H1 (cell line): ENCODE measurements at regions of chr5 and their contacts with region 1.

Region 1: GRCh38 chr5:177454397-177455035 is 7.9 kb downstream of the PRR7 start:
- DNase-seq: peak in 1 of 2 experiments; percentile 98
- H3K4me3 ChIP-seq: peak overlapping the region; percentile 47 to 86 (median 81)
- H3K27ac ChIP-seq: peak overlapping the region; percentile 86; the same call in 1 of the 2 replicates
- H3K4me1 ChIP-seq: peaks cover 0 to 22% (median 10%) of the 10 kb centered on the region in 4 experiments; a peak in 6 of 7 replicates
- H3K27me3 ChIP-seq: peaks cover 0 to 10% (median 8%) of the 10 kb centered on the region in 4 experiments; a peak in 2 of 7 replicates
- CTCF ChIP-seq: peak in 2 of 3 experiments; percentile 82 to 88; a peak in 3 of 4 replicates
- EP300 ChIP-seq: peak in 1 of 2 experiments; percentile 67; a peak in 1 of 3 replicates
- POLR2A ChIP-seq: peak in 1 of 2 experiments; percentile 63; a peak in 1 of 3 replicates
- RAD21 ChIP-seq: peak; percentile 72 to 85

Region 2: GRCh38 chr5:177194274-177194673 is 260.2 kb before region 1 on chr5:
- CTCF ChIA-PET with region 1: no interaction called
- POLR2A ChIA-PET with region 1: no interaction called
- DNase-seq: peak in 1 of 2 experiments; percentile 2
- H3K4me3 ChIP-seq: no peak overlapping the region
- H3K27ac ChIP-seq: no peak overlapping the region
- H3K4me1 ChIP-seq: no peaks in the 10 kb centered on the region
- H3K27me3 ChIP-seq: no peaks in the 10 kb centered on the region
- CTCF ChIP-seq: no peak
- EP300 ChIP-seq: no peak
- POLR2A ChIP-seq: no peak
- RAD21 ChIP-seq: no peak

Region 3: GRCh38 chr5:177311723-177312648 is 142.5 kb before region 1 on chr5 and contains the start of gene MXD3:
- CTCF ChIA-PET with region 1: interaction called, 60 read pairs
- POLR2A ChIA-PET with region 1: interaction called, 15 read pairs
- DNase-seq: peak; percentile 95 to 98
- H3K4me3 ChIP-seq: peak within 1 kb of the TSS; percentile 52 to 75 (median 67)
- H3K27ac ChIP-seq: peak within 1 kb of the TSS; percentile 89
- H3K4me1 ChIP-seq: peaks cover 0 to 19% (median 14%) of the 10 kb centered on the region in 4 experiments; a peak in 6 of 7 replicates
- H3K27me3 ChIP-seq: no peaks in the 10 kb centered on the region
- CTCF ChIP-seq: no peak
- EP300 ChIP-seq: no peak
- POLR2A ChIP-seq: peak in 1 of 2 experiments; percentile 60; a peak in 2 of 3 replicates
- RAD21 ChIP-seq: no peak
- total RNA-seq, gene MXD3: 7.7 and 10.3 TPM in 2 replicates

Region 4: DNA sequence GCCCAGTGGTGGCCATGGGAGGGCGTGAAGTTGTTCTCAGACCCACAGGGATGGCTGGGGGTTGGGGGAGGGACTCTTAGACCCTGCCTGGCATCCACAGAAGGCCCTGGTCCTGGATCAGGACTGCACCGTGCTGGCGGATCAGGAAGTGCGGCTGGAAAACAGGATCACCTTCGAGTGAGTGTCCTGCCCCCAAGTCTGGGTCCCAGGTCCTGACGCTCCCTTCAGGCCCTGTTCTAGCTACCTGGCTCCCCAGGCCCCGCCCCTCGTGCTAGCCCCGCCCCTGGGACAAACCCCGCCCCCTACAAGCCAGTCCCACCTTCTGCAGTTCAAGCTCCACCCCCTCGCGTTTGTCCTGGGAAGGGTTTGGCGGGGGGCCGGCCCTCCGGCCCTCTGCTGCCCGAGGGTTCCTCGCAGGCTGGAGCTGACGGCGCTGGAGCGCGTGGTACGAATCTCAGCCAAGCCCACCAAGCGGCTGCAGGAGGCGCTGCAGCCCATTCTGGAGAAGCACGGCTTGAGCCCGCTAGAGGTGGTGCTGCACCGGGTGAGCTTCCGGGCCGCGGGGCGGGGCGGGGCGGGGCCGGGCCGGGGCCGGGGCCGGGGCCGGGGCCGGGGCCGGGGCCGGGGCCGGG is 83.9 kb before region 1 on chr5:
- CTCF ChIA-PET with region 1: interaction called, 232 read pairs
- POLR2A ChIA-PET with region 1: interaction called, 17 read pairs
- DNase-seq: peak; percentile 93 to 99
- H3K4me3 ChIP-seq: peak overlapping the region; percentile 23 to 63 (median 58); a peak in 6 of 8 replicates
- H3K27ac ChIP-seq: 0 out of 2 replicates have a peak overlapping the region, but pooled peaks have one; percentile 60
- H3K4me1 ChIP-seq: peaks cover 8 to 36% (median 31%) of the 10 kb centered on the region in 4 experiments
- H3K27me3 ChIP-seq: peaks cover 1 to 14% (median 12%) of the 10 kb centered on the region in 4 experiments; a peak in 4 of 7 replicates
- CTCF ChIP-seq: peak in 2 of 3 experiments; percentile 79 to 98; a peak in 3 of 4 replicates
- EP300 ChIP-seq: no peak
- POLR2A ChIP-seq: 0 out of 3 replicates have a peak, but pooled peaks of 1 of the 2 experiments have one; percentile 16
- RAD21 ChIP-seq: peak; percentile 66 to 75

Region 5: GRCh38 chr5:177412603-177413233 is 41.8 kb before region 1 on chr5:
- CTCF ChIA-PET with region 1: interaction called, 343 read pairs
- POLR2A ChIA-PET with region 1: interaction called, 460 read pairs
- DNase-seq: no peak
- H3K4me3 ChIP-seq: no peak overlapping the region
- H3K27ac ChIP-seq: no peak overlapping the region
- H3K4me1 ChIP-seq: no peaks in the 10 kb centered on the region; a peak in 1 of 7 replicates
- H3K27me3 ChIP-seq: peaks cover 0 to 14% (median 2%) of the 10 kb centered on the region in 4 experiments; a peak in 5 of 7 replicates
- CTCF ChIP-seq: no peak
- EP300 ChIP-seq: no peak
- POLR2A ChIP-seq: no peak
- RAD21 ChIP-seq: no peak

Region 6: DNA sequence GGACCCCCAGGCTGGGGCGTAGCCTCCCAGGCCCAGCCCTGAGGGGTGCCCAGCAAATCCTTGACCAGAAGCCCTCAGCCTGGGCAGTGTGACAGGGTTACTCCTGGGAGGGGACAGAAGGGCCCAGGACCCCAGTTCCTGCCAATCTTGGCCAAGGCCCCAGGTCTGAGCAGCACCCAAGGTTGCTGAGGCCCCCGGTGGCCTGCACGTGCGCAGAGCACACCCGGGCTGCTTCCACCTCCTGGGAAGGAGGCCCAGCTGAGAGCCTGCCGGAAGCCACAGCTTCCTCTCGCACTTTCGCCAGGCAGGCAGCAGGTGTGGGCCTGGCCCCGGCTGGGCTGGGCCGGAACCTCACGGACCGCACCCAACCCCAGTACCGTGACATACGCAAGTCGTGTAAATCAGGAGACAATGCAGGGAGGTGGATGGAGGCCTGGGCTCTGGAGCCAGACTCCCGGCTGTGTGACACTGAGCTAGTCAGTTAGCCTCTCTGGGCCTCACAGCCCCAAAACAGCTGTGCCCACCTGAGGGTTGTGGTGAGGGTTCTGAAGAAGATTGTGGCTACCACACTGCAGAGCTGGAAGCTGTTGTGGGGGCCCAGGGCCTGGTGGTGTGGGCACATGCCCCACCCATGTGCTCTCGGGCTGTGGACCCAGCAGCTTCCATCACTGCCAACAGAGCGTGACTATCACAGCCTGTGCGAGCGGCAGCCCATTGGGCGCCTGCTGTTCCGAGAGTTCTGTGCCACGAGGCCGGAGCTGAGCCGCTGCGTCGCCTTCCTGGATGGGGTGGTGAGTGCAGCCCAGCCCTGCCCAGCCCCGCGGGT is 23.0 kb before region 1 on chr5:
- CTCF ChIA-PET with region 1: interaction called, 146 read pairs
- POLR2A ChIA-PET with region 1: interaction called, 3,349 read pairs
- DNase-seq: no peak
- H3K4me3 ChIP-seq: no peak overlapping the region
- H3K27ac ChIP-seq: no peak overlapping the region
- H3K4me1 ChIP-seq: peaks cover 0 to 14% (median 9%) of the 10 kb centered on the region in 4 experiments; a peak in 5 of 7 replicates
- H3K27me3 ChIP-seq: no peaks in the 10 kb centered on the region
- CTCF ChIP-seq: no peak
- EP300 ChIP-seq: no peak
- POLR2A ChIP-seq: no peak
- RAD21 ChIP-seq: no peak

Region 7: DNA sequence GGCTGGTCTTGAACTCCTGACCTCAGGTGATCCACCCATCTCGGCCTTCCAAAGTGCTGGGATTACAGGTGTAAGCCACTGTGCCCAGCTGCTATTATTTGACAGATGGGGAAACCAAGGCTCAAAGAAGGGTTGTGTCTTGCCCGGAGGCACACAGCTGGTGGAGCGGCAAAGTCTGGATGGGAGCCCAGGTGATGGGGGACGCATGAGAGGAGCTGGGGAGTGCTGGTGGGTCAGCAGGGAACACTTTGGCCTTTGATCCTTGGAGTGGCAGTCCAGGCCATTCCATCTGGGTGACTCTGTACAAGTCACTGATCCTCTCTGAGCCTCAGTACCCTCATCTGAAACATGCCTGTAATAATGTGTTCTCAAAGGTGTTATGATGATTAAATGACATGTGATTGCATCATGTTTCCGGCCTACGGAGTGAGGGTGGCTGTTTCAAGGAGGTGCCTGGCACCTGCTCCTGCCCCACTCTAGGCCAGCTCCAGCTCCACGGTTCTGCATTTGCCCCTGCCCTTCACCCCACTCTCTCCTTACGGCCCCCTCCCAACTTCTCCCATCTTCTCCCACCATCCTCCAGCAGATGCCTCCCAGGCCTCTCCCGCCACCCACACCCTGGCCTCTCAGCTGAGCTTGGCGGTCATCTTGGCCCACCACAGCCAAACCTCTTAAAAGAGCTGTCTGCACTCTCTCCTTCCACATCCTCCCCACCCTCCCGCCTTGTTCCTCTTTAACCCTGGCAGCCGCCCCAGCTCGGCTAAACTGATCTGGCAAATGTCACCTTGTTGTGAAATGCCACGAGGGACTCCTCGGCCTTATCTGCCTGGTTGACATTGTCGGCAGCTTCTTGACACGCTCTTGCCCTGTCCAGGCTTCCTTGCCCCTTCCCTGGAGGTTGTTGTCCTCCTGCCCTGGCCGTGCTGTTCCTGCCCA is 24.5 kb after region 1 on chr5:
- CTCF ChIA-PET with region 1: interaction called, 64 read pairs
- POLR2A ChIA-PET with region 1: interaction called, 3,349 read pairs
- DNase-seq: no peak
- H3K4me3 ChIP-seq: no peak overlapping the region
- H3K27ac ChIP-seq: no peak overlapping the region
- H3K4me1 ChIP-seq: peaks cover 0 to 17% (median 9%) of the 10 kb centered on the region in 4 experiments; a peak in 6 of 7 replicates
- H3K27me3 ChIP-seq: no peaks in the 10 kb centered on the region
- CTCF ChIP-seq: no peak
- EP300 ChIP-seq: no peak
- POLR2A ChIP-seq: peak in 1 of 2 experiments; percentile 63; a peak in 2 of 3 replicates
- RAD21 ChIP-seq: no peak